Activated CD4-positive, alpha-beta memory T cell treated with anti-CD3 and anti-CD28 coated beads, Interleukin-2, amount 10 ng/mL, durations not matched to agents 7 days and 5 days (primary cell): ENCODE measurements at regions of chr1 and their contacts with region 1.

Region 1: DNA sequence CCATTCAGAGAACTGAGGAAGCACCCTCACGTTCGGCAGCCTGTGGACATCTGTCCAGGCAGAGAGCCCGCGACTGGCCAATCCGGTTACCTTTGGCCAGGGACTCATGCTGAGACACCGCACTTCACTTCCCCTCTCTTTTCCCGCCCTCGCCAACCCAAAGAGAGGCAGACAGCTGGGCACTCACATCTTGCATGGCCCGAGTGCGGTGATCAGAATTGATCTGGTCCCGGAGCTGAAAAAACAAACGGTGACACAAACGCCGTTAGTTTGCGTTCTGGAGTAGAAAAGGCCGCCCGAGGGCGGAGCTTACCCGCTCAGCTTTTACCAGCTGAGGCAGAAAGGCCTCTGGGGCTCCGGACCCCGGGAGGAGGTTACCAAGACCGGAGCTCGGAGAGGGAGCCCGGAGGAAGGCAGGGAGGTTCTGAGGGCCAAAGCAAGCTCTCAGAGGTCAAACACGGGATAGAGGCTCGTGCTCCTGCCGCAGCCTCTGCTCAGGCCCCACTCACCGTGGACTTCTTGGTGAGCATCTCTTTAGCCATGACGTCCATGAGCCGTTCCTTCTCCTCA is 376 bp downstream of the SF3A3 start:
- DNase-seq: peak; percentile 53
- H3K4me3 Mint-ChIP-seq: peak overlapping the region; percentile 89
- H3K27ac Mint-ChIP-seq: peak overlapping the region; percentile 87
- H3K4me1 Mint-ChIP-seq: peaks cover 23% of the 10 kb centered on the region
- H3K27me3 Mint-ChIP-seq: no peaks in the 10 kb centered on the region

Region 2: GRCh38 chr1:38018864-38019343 is 29.5 kb after region 1 on chr1:
- CTCF ChIA-PET with region 1: interaction called, 39 read pairs
- POLR2A ChIA-PET with region 1: interaction called, 28 read pairs
- DNase-seq: no peak
- H3K4me3 Mint-ChIP-seq: no peak overlapping the region
- H3K27ac Mint-ChIP-seq: no peak overlapping the region
- H3K4me1 Mint-ChIP-seq: peaks cover 24% of the 10 kb centered on the region
- H3K27me3 Mint-ChIP-seq: no peaks in the 10 kb centered on the region